MCF 10A (cell line): ENCODE measurements at regions of chr14 and their contacts with region 1.

Region 1: GRCh38 chr14:77151918-77152588 is 10.5 kb upstream of the ZDHHC22 start:
- DNase-seq: peak; percentile 31
- H3K4me3 Mint-ChIP-seq: no peak overlapping the region
- H3K27ac Mint-ChIP-seq: no peak overlapping the region
- H3K4me1 Mint-ChIP-seq: peaks cover 5% of the 10 kb centered on the region
- H3K27me3 Mint-ChIP-seq: peaks cover 4% of the 10 kb centered on the region
- CTCF ChIP-seq: peak; percentile 32

Region 2: GRCh38 chr14:76742966-76743365 is 409.1 kb before region 1 on chr14:
- CTCF ChIA-PET with region 1: no interaction called
- POLR2A ChIA-PET with region 1: no interaction called
- intact Hi-C with region 1: no loop called
- DNase-seq: peak; percentile 54
- H3K4me3 Mint-ChIP-seq: no peak overlapping the region
- H3K27ac Mint-ChIP-seq: no peak overlapping the region
- H3K4me1 Mint-ChIP-seq: no peaks in the 10 kb centered on the region
- H3K27me3 Mint-ChIP-seq: peaks cover 54% of the 10 kb centered on the region
- CTCF ChIP-seq: no peak

Region 3: GRCh38 chr14:77124345-77125280 is 27.4 kb before region 1 on chr14:
- CTCF ChIA-PET with region 1: interaction called, 13 read pairs
- POLR2A ChIA-PET with region 1: interaction called, 7 read pairs
- intact Hi-C with region 1: no loop called
- DNase-seq: no peak
- H3K4me3 Mint-ChIP-seq: no peak overlapping the region
- H3K27ac Mint-ChIP-seq: no peak overlapping the region
- H3K4me1 Mint-ChIP-seq: peaks cover 33% of the 10 kb centered on the region
- H3K27me3 Mint-ChIP-seq: no peaks in the 10 kb centered on the region
- CTCF ChIP-seq: no peak

Region 4: DNA sequence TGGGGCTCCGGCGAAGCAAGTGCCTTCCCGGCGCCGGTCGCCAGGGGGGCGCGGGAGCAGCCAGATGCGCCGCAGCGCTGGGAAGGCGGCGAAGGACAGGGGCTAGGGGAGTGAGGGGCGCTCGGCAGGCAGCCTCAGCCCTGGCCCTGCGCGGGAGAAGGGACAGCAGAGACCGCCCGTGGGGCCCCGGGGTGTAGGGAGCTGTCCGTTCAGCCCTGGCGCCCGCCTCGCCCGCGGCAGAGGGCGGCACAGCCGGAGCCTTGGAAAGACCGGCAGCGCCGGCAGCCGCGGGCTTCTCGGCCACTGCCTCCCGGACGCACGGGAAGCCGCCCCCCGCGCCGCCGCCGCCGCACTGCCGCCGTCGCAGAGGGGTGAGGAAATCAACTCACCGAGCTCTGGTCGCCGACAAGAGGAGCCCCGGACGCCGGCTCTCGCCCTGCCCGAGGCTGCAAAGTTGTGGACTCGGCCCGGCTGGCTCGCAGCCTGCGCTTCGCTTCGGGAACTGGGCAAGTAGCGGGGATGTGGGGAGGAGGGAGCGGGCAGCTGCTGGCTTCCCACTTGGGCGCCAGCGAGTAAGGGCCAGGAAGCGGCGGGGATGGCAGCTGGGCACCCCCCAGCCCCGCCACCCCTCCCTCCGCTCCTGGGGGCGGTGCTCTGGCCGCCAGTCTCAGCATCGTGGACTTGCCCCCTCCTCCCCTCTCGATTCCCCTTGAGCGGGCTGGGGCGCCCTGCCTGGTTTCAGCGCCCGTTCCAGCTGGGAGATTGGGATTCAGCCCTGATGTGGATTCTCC is 10.6 kb before region 1 on chr14 and contains the start of gene ZDHHC22:
- CTCF ChIA-PET with region 1: interaction called, 57 read pairs
- POLR2A ChIA-PET with region 1: interaction called, 3 read pairs
- intact Hi-C with region 1: no loop called
- DNase-seq: no peak
- H3K4me3 Mint-ChIP-seq: peak within 1 kb of the TSS; percentile 32
- H3K27ac Mint-ChIP-seq: no peak within 1 kb of the TSS
- H3K4me1 Mint-ChIP-seq: no peaks in the 10 kb centered on the region
- H3K27me3 Mint-ChIP-seq: peaks cover 89% of the 10 kb centered on the region
- CTCF ChIP-seq: peak; percentile 25
- total RNA-seq, gene ZDHHC22: not detected in 2 replicates

Region 5: GRCh38 chr14:77212943-77213678 is 61.1 kb after region 1 on chr14:
- CTCF ChIA-PET with region 1: interaction called, 123 read pairs
- POLR2A ChIA-PET with region 1: interaction called, 3 read pairs
- intact Hi-C with region 1: loop called (anchors 1 kb)
- DNase-seq: peak; percentile 65
- H3K4me3 Mint-ChIP-seq: no peak overlapping the region
- H3K27ac Mint-ChIP-seq: no peak overlapping the region
- H3K4me1 Mint-ChIP-seq: no peaks in the 10 kb centered on the region
- H3K27me3 Mint-ChIP-seq: no peaks in the 10 kb centered on the region
- CTCF ChIP-seq: peak; percentile 83

Region 6: GRCh38 chr14:77306851-77307765 is 155.1 kb after region 1 on chr14:
- CTCF ChIA-PET with region 1: interaction called, 50 read pairs
- POLR2A ChIA-PET with region 1: interaction called, 5 read pairs
- intact Hi-C with region 1: no loop called
- DNase-seq: no peak
- H3K4me3 Mint-ChIP-seq: no peak overlapping the region
- H3K27ac Mint-ChIP-seq: peak overlapping the region; percentile 67
- H3K4me1 Mint-ChIP-seq: peaks cover 49% of the 10 kb centered on the region
- H3K27me3 Mint-ChIP-seq: no peaks in the 10 kb centered on the region
- CTCF ChIP-seq: no peak

Region 7: GRCh38 chr14:77457522-77458290 is 305.7 kb after region 1 on chr14 and contains the starts of genes AHSA1 and VIPAS39:
- CTCF ChIA-PET with region 1: interaction called, 4 read pairs
- POLR2A ChIA-PET with region 1: no interaction called
- intact Hi-C with region 1: loop called (anchors 5 kb)
- DNase-seq: peak; percentile 99
- H3K4me3 Mint-ChIP-seq: peak within 1 kb of the TSS; percentile 96
- H3K27ac Mint-ChIP-seq: peak within 1 kb of the TSS; percentile 95
- H3K4me1 Mint-ChIP-seq: peaks cover 14% of the 10 kb centered on the region
- H3K27me3 Mint-ChIP-seq: no peaks in the 10 kb centered on the region
- CTCF ChIP-seq: no peak
- total RNA-seq, gene AHSA1: 77.7 and 78.5 TPM in 2 replicates
- total RNA-seq, gene VIPAS39: 18.7 and 19.8 TPM in 2 replicates